K562 (cell line): ENCODE measurements at regions of chr7 and their contacts with region 1.

Region 1: GRCh38 chr7:65216459-65216858 is 157.2 kb upstream of the ZNF92 start:
- DNase-seq: peak in 2 of 4 experiments; percentile 52 to 83
- ATAC-seq: peak; percentile 93
- H3K4me3 ChIP-seq: no peak overlapping the region
- H3K27ac ChIP-seq: no peak overlapping the region
- H3K4me1 ChIP-seq: no peaks in the 10 kb centered on the region
- H3K27me3 ChIP-seq: no peaks in the 10 kb centered on the region
- CTCF ChIP-seq: peak; percentile 83 to 93 (median 84)
- EP300 ChIP-seq: no peak
- POLR2A ChIP-seq: no peak
- RAD21 ChIP-seq: peak; percentile 64 to 88

Region 2: DNA sequence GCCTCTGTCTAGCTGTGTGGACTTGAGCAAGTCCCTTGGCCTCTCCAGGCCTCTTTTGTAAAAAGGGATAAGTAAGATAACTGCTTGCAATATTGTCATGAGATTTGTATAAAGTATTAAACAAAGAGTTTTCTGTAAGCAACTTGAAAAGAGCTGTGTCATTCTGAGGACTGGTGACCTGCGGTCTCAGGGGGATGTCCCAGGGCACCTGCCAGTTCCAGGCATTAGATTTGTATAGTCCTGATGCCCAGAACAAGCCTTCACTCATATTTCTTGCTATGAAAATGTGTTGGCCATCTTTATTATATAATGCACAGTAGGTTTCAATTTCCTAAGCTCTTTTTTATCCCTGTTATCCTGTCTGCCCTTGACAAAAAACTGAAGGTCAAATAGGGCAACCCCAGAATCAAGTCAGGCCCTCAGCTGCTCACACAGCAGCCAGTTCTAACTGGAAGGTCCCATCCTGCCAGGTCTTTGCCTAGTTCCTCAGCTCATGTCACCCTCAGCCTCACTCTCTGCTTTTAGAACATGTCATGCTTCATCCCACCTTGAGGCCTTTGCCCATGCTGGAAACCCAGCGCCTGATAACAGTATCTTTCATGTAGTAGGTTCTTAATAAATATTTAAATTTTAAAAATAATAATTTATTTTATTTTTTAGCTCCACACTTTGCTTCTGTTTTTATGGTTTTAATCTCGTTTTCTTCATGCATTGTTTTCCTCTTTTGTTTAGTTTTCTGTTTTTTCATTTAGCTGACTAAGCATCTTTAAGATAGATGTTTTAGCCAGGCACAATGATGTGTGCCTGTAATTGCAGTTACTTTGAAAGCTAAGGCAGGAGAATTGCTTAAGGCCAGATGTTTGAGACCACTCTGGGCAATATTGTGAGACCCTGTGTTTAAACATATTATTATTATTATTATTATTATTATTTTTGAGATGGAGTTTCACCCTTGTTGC is 69.7 kb after region 1 on chr7:
- CTCF ChIA-PET with region 1: no interaction called
- POLR2A ChIA-PET with region 1: no interaction called
- in situ Hi-C with region 1: no loop called
- intact Hi-C with region 1: no loop called
- DNase-seq: peak in 1 of 4 experiments; percentile 7
- ATAC-seq: peak; percentile 47; the same call in 2 of the 3 replicates
- H3K4me3 ChIP-seq: no peak overlapping the region
- H3K27ac ChIP-seq: no peak overlapping the region
- H3K4me1 ChIP-seq: no peaks in the 10 kb centered on the region
- H3K27me3 ChIP-seq: no peaks in the 10 kb centered on the region
- CTCF ChIP-seq: no peak
- EP300 ChIP-seq: no peak
- POLR2A ChIP-seq: no peak
- RAD21 ChIP-seq: no peak

Region 3: GRCh38 chr7:65307651-65308299 is 91.3 kb after region 1 on chr7:
- CTCF ChIA-PET with region 1: interaction called, 10 read pairs
- POLR2A ChIA-PET with region 1: no interaction called
- in situ Hi-C with region 1: loop called (anchors 5 kb)
- intact Hi-C with region 1: loop called (anchors 1 kb)
- DNase-seq: peak; percentile 70 to 82 (median 74)
- ATAC-seq: peak; percentile 96
- H3K4me3 ChIP-seq: no peak overlapping the region
- H3K27ac ChIP-seq: no peak overlapping the region
- H3K4me1 ChIP-seq: peaks cover 0 to 2% of the 10 kb centered on the region in 2 experiments; a peak in 1 of 5 replicates
- H3K27me3 ChIP-seq: no peaks in the 10 kb centered on the region
- CTCF ChIP-seq: peak; percentile 85 to 95 (median 91)
- EP300 ChIP-seq: no peak
- POLR2A ChIP-seq: no peak
- RAD21 ChIP-seq: peak; percentile 89 to 92

Region 4: DNA sequence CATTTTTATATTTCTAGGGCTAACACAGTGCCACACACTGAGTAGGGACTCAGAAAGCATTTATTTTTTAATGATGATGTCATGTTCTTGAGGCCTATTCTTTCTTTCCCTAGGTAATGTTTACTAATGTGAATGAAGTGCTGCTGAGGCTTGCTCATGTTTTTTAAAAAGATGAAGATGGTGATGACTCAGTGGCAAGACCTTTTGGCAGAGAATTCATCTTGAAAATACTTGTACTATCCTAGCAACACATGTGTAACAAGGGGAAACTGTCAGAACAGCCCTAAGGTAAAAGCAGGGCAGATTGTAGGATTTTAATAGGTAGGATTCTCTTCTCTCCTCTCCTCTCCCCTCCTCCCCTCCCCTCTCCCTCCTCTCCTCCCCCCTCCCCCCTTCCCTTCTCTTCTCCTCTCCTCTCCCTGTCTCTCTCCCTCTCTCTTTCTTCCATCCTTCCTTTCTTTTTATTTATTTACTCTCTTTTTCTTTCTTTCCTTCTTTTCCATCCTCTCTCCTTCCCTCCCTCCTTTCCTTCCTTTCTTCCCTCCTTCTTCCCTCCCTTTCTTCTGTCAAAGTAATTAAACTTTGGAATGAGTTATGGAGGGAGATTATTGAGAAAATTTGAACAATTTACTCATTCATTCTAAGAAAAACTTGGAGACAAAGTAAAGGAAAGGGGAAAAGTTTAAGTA is 232.5 kb after region 1 on chr7:
- CTCF ChIA-PET with region 1: no interaction called
- POLR2A ChIA-PET with region 1: no interaction called
- in situ Hi-C with region 1: no loop called
- intact Hi-C with region 1: loop called (anchors 2 kb)
- DNase-seq: no peak
- ATAC-seq: no peak
- H3K4me3 ChIP-seq: no peak overlapping the region
- H3K27ac ChIP-seq: no peak overlapping the region
- H3K4me1 ChIP-seq: no peaks in the 10 kb centered on the region
- H3K27me3 ChIP-seq: peaks cover 0 to 2% of the 10 kb centered on the region in 2 experiments; a peak in 1 of 5 replicates
- CTCF ChIP-seq: no peak
- EP300 ChIP-seq: no peak
- POLR2A ChIP-seq: no peak
- RAD21 ChIP-seq: no peak

Region 5: DNA sequence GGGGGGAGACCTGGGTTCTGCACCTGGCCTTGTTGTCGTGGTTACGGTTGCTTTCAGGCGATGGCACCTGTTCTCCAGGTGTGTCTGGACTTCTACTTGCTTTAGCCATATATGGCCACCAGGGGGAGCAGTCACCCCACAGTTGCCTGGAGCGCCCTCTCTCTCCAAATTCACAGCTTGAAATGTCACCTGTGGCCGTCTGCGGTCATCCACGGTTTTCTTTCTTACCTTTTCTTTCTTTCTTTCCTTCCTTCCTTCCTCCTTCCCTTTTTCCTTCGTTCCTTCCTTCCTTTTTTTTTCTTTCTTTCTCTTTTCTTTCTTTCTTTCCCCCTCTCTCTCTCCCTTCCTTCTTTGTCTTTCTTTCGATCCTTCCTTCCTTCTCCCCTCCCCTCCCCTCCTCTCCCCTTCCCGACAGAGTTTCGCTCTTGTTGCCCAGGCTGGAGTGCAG is 505.9 kb after region 1 on chr7:
- CTCF ChIA-PET with region 1: no interaction called
- POLR2A ChIA-PET with region 1: no interaction called
- in situ Hi-C with region 1: loop called (anchors 5 kb)
- intact Hi-C with region 1: no loop called
- DNase-seq: peak; percentile 47 to 72 (median 54)
- ATAC-seq: peak; percentile 89
- H3K4me3 ChIP-seq: no peak overlapping the region
- H3K27ac ChIP-seq: no peak overlapping the region
- H3K4me1 ChIP-seq: no peaks in the 10 kb centered on the region
- H3K27me3 ChIP-seq: no peaks in the 10 kb centered on the region
- CTCF ChIP-seq: peak; percentile 87 to 91 (median 87)
- EP300 ChIP-seq: no peak
- POLR2A ChIP-seq: no peak; the same call in 1 of the 2 replicates
- RAD21 ChIP-seq: peak; percentile 40 to 46